ENCODE measurements at regions of chr2 and their contacts with region 1.

Region 1: GRCh38 chr2:75608684-75609333 is 37.8 kb upstream of the MRPL19 start:
- DNase-seq: peak; percentile 66
- H3K4me3 Mint-ChIP-seq: no peak overlapping the region
- H3K27ac Mint-ChIP-seq: no peak overlapping the region
- H3K4me1 Mint-ChIP-seq: peaks cover 43% of the 10 kb centered on the region
- H3K27me3 Mint-ChIP-seq: no peaks in the 10 kb centered on the region
- CTCF ChIP-seq: peak; percentile 91

Region 2: GRCh38 chr2:75053484-75054112 is 555.2 kb before region 1 on chr2:
- CTCF ChIA-PET with region 1: interaction called, 3 read pairs
- POLR2A ChIA-PET with region 1: no interaction called
- intact Hi-C with region 1: loop called (anchors 10 kb)
- DNase-seq: peak; percentile 62
- H3K4me3 Mint-ChIP-seq: no peak overlapping the region
- H3K27ac Mint-ChIP-seq: no peak overlapping the region
- H3K4me1 Mint-ChIP-seq: no peaks in the 10 kb centered on the region
- H3K27me3 Mint-ChIP-seq: no peaks in the 10 kb centered on the region
- CTCF ChIP-seq: peak; percentile 78

Region 3: GRCh38 chr2:75241696-75242095 is 367.1 kb before region 1 on chr2:
- CTCF ChIA-PET with region 1: no interaction called
- POLR2A ChIA-PET with region 1: no interaction called
- intact Hi-C with region 1: no loop called
- DNase-seq: peak; percentile 40
- H3K4me3 Mint-ChIP-seq: no peak overlapping the region
- H3K27ac Mint-ChIP-seq: no peak overlapping the region
- H3K4me1 Mint-ChIP-seq: peaks cover 9% of the 10 kb centered on the region
- H3K27me3 Mint-ChIP-seq: no peaks in the 10 kb centered on the region
- CTCF ChIP-seq: no peak

Region 4: GRCh38 chr2:75466708-75467311 is 142.0 kb before region 1 on chr2:
- CTCF ChIA-PET with region 1: interaction called, 369 read pairs
- POLR2A ChIA-PET with region 1: interaction called, 8 read pairs
- intact Hi-C with region 1: loop called (anchors 1 kb)
- DNase-seq: peak; percentile 57
- H3K4me3 Mint-ChIP-seq: no peak overlapping the region
- H3K27ac Mint-ChIP-seq: no peak overlapping the region
- H3K4me1 Mint-ChIP-seq: peaks cover 5% of the 10 kb centered on the region
- H3K27me3 Mint-ChIP-seq: peaks cover 20% of the 10 kb centered on the region
- CTCF ChIP-seq: peak; percentile 47

Region 5: GRCh38 chr2:75538521-75539490 is 70.0 kb before region 1 on chr2:
- CTCF ChIA-PET with region 1: interaction called, 12 read pairs
- POLR2A ChIA-PET with region 1: no interaction called
- intact Hi-C with region 1: no loop called
- DNase-seq: no peak
- H3K4me3 Mint-ChIP-seq: no peak overlapping the region
- H3K27ac Mint-ChIP-seq: no peak overlapping the region
- H3K4me1 Mint-ChIP-seq: no peaks in the 10 kb centered on the region
- H3K27me3 Mint-ChIP-seq: no peaks in the 10 kb centered on the region
- CTCF ChIP-seq: no peak

Region 6: GRCh38 chr2:75560768-75561565 is 47.8 kb before region 1 on chr2 and contains the start of gene EVA1A:
- CTCF ChIA-PET with region 1: interaction called, 159 read pairs
- POLR2A ChIA-PET with region 1: interaction called, 38 read pairs
- intact Hi-C with region 1: loop called (anchors 1 kb)
- DNase-seq: peak; percentile 58
- H3K4me3 Mint-ChIP-seq: peak within 1 kb of the TSS; percentile 92
- H3K27ac Mint-ChIP-seq: peak within 1 kb of the TSS; percentile 46
- H3K4me1 Mint-ChIP-seq: peaks cover 28% of the 10 kb centered on the region
- H3K27me3 Mint-ChIP-seq: no peaks in the 10 kb centered on the region
- CTCF ChIP-seq: no peak
- total RNA-seq, gene EVA1A: 7.6 and 14.4 TPM in 2 replicates

Region 7: GRCh38 chr2:75592028-75592427 is 16.8 kb before region 1 on chr2:
- CTCF ChIA-PET with region 1: interaction called, 18 read pairs
- POLR2A ChIA-PET with region 1: interaction called, 44 read pairs
- intact Hi-C with region 1: no loop called
- DNase-seq: peak; percentile 90
- H3K4me3 Mint-ChIP-seq: no peak overlapping the region
- H3K27ac Mint-ChIP-seq: peak overlapping the region; percentile 72
- H3K4me1 Mint-ChIP-seq: peaks cover 48% of the 10 kb centered on the region
- H3K27me3 Mint-ChIP-seq: no peaks in the 10 kb centered on the region
- CTCF ChIP-seq: no peak

Region 8: GRCh38 chr2:75634945-75635344 is 26.1 kb after region 1 on chr2:
- CTCF ChIA-PET with region 1: interaction called, 62 read pairs
- POLR2A ChIA-PET with region 1: interaction called, 3 read pairs
- intact Hi-C with region 1: no loop called
- DNase-seq: peak; percentile 25
- H3K4me3 Mint-ChIP-seq: no peak overlapping the region
- H3K27ac Mint-ChIP-seq: no peak overlapping the region
- H3K4me1 Mint-ChIP-seq: peaks cover 6% of the 10 kb centered on the region
- H3K27me3 Mint-ChIP-seq: peaks cover 29% of the 10 kb centered on the region
- CTCF ChIP-seq: no peak